HEK293 (cell line): ENCODE measurements at regions of chr19 and their contacts with region 1.

Region 1: GRCh38 chr19:37594304-37594981 is at the starts of genes ZNF540 and ZNF571:
- H3K4me3 ChIP-seq: peak within 1 kb of the TSS; percentile 71
- H3K27ac ChIP-seq: peak within 1 kb of the TSS; percentile 87
- H3K4me1 ChIP-seq: 0 out of 2 replicates have a peak, but pooled peaks cover 5% of the 10 kb centered on the region
- CTCF ChIP-seq: peak; percentile 58; the same call in 1 of the 2 replicates

Region 2: DNA sequence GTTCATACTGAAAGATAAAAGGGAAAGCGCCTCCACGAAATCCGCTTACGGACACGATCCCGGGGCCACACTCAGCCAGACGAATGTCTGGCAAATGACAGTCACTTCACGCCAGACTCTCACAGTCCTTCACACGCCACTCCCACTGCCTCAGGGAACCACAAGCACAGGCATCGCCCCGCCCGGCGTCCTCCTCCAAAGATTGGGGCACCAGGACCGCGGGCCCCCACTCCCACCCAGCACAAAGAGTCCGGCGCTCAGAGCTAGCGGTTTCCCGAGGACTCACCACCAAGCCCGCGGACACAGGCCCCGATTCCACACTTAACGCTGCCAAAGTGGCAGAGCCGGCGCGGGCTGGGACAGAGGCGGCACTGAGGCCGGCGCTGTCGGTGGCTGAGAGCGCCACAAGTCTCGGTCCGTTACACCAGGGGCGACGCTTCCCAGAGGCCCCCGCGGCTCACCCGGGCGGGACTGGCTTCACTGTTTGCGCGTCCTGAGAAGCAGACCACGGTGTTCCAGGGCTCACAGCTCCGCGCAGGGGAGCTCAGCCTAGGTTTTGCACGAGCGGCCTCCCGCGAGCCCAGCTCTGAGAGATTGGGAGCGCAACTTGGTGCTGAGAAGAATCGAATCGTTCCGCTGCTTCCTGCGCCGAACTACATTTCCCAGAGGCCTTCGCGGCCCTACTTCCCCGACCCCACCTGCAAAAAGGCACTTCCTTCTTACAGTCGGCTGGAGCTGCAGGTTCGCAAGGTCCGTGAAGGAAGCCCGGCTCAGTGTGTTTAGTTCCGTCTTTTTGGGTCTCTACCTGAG is 127.4 kb before region 1 on chr19 and contains the start of gene ZNF569:
- CTCF ChIA-PET with region 1: no interaction called
- POLR2A ChIA-PET with region 1: interaction called, 26 read pairs
- H3K4me3 ChIP-seq: peak within 1 kb of the TSS; percentile 63
- H3K27ac ChIP-seq: peak within 1 kb of the TSS; percentile 88
- H3K4me1 ChIP-seq: peaks cover 6% of the 10 kb centered on the region; the same call in 1 of the 2 replicates
- CTCF ChIP-seq: peak; percentile 88

Region 3: DNA sequence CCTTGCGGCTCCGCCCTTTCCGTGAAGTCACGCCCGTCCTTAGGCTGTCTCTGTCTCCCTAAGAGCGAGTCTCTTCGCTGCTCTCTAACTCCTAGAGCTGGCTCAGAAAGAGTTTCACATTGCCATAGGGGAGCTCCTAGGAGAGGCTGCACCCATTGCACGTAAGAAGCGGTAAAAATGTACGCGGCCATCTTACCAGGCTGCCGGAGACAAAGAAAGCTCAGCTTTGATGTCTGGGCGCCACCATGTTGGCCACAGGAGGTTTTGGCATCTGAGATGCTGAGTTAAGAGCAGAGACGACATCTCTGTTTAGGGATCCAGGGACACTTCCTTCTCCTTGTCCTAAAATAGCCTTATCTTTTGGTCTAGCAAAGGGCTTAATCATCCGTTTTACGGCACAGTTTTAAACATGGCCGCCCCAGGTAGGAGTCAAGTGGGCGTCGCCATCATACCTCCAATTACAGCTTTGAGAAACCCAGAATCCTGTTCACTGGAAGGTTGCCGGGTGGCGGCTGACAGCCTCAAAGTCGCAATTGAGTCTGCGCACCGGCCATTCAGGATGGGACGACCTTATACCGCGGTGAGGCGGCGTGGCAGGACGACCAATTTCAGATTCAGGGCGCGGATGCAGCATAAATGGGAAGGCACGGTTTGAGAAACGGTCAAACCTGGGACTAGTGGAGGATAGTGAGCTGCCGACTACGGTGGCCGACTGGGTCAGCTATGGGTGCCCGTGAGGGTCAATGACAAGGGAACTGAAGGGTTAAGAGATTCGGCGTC is 87.9 kb before region 1 on chr19 and contains the start of gene ZNF793:
- CTCF ChIA-PET with region 1: no interaction called
- POLR2A ChIA-PET with region 1: interaction called, 29 read pairs
- H3K4me3 ChIP-seq: peak within 1 kb of the TSS; percentile 53
- H3K27ac ChIP-seq: peak within 1 kb of the TSS; percentile 68
- H3K4me1 ChIP-seq: no peaks in the 10 kb centered on the region
- CTCF ChIP-seq: peak; percentile 41; the same call in 1 of the 2 replicates

Region 4: DNA sequence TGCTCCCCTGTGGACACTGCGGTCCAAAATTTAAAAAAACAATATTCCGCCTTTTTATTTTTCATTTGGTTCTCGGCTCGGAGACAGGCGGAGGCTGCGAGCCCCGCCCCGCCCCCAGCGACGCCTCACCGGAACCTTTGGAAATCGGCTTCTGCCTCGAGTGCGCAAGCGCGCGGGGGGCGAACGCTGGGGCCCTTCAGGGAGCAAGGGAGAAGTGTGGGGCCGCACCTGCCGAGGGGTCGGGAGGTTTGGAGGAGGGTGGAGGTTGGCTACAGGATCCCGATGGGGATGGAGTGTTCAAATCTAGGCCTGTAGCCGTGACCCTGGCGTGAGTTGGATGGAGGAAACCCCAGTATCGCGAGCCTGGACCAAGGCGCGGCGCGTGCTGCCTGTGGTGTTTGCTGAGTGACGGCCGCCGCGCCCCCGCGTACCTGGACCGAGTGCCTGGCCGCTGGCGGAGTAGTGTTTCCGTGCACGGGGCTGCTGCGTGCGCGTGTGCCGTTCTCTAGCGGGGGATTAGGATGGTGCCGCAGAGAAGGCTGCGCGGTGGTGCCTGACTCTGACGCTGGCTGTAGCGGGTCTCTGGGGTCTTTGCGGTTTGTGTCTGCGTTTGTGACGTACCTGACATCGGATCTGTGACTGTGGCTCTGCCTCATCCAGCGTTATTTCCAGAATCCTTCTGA is 61.4 kb after region 1 on chr19:
- CTCF ChIA-PET with region 1: no interaction called
- POLR2A ChIA-PET with region 1: interaction called, 28 read pairs
- H3K4me3 ChIP-seq: peak overlapping the region; percentile 52
- H3K27ac ChIP-seq: peak overlapping the region; percentile 96
- H3K4me1 ChIP-seq: peaks cover 8% of the 10 kb centered on the region; the same call in 1 of the 2 replicates
- CTCF ChIP-seq: peak; percentile 88

Region 5: DNA sequence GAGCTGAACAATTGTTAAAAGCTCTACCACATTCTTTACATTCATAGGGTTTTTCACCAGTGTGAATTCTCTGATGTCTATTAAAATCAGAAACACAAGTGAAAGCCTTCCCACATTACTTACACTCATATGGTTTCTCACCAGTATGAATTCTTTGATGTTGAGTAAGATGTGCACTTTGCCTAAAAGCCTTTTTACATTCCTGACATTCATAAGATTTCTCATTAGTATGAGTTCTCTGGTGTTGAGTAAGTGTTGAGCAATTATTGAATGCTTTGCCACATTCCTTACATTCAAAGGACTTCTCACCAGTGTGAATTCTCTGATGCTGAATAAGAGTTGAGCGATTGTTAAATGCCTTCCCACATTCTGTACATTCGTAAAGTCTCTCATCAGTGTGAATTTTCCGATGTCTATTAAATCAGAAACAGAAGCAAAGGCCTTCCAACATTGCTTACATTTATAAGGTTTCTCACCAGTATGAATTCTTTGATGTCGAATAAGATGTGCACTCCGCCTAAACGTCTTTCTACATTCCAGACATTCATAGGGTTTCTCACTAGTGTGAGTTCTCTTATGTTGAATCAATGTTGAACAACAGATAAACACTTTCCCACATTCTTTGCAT is 75.0 kb after region 1 on chr19:
- CTCF ChIA-PET with region 1: no interaction called
- POLR2A ChIA-PET with region 1: no interaction called
- H3K4me3 ChIP-seq: no peak overlapping the region
- H3K27ac ChIP-seq: no peak overlapping the region
- H3K4me1 ChIP-seq: no peaks in the 10 kb centered on the region
- CTCF ChIP-seq: no peak

Region 6: GRCh38 chr19:37719111-37719926 is 124.9 kb after region 1 on chr19 and contains the start of gene ZNF607:
- CTCF ChIA-PET with region 1: interaction called, 5 read pairs
- POLR2A ChIA-PET with region 1: interaction called, 11 read pairs
- H3K4me3 ChIP-seq: peak within 1 kb of the TSS; percentile 69
- H3K27ac ChIP-seq: peak within 1 kb of the TSS; percentile 89
- H3K4me1 ChIP-seq: peaks cover 6% of the 10 kb centered on the region
- CTCF ChIP-seq: peak; percentile 94

Region 7: DNA sequence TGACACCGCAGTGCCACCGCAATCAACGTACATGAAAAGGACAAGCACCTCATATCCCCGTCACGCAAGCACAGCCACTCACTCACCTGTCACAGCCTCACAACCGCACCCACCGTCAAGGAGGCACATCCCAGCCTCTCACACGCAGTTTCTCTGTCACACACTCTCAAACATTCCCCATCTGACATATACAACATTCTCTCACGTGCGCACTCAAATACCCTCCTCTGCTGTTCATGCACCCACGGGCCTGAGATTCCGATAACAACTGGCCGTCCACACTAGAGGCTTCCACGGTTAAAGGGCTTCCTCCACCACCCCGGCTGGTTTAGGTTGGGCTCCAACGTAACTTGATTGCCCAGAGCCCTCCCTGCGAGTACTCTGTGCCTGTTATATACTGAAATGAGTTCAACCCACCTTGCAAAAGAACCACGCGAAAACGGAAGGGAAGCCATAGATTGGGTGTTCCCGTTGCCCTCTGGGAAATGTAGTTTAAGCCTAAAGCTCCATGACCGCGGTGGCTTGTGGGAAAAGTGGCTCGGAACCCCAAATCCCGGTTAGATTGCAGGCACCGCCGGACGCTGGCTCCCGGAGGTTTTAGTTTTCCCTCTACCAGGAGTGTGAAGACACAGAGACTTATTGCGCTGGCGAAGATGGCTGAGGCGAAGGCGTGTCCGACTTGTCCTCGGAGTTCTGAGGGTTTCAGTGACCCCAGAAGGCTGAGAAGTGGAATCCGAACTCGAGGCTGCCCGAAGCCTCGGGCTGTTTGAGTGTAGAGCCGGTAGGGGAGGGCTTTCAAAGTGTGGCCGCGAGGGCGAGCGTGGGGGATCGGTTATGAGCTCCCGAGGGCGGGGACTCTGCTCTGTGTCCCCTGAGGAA is 184.9 kb after region 1 on chr19 and contains the start of gene ZNF573:
- CTCF ChIA-PET with region 1: no interaction called
- POLR2A ChIA-PET with region 1: interaction called, 21 read pairs
- H3K4me3 ChIP-seq: peak within 1 kb of the TSS; percentile 56
- H3K27ac ChIP-seq: peak within 1 kb of the TSS; percentile 86
- H3K4me1 ChIP-seq: peaks cover 3% of the 10 kb centered on the region; the same call in 1 of the 2 replicates
- CTCF ChIP-seq: peak; percentile 77